Ovary (tissue), 10 donors: ENCODE measurements at regions of chr11 and their contacts with region 1.

Region 1: DNA sequence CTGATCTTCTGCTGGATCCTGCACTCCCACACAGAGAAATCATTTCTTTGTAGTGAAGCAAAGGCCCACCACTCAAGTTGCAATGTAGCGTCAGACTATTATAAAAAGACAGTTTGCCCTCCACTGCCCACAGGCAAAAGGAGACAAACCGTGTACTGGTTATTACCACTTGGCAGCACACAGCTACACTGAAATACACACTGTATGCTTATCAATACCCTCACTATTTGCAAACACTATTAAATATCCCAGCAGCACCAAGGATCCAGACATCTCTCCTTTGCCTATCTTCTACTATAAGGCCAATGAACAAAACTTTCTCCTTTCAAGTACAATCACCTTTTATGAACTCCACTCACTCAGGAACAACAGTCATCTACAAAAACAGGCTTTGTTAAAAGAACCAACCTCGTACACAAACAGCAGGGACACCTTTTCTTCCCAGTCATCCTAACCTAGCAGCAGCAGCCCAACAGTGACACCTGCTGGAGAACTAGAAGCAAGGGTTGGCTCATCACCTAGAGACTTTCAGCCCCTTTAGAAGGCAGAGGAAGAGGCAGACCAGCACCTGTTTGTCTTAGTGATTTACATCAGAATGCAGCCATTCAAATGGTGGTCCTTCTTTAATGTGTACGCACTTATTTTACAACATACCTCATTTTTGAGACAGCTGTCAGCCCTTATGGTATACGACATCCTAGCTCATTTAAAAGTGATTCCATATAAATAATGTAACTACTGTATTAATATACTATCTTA is 56.1 kb downstream of the AMBRA1 start:
- DNase-seq: peak; percentile 45 to 65 (median 62)
- H3K4me3 ChIP-seq: no peak overlapping the region
- H3K27ac ChIP-seq: no peak overlapping the region
- H3K4me1 ChIP-seq: no peaks in the 10 kb centered on the region
- H3K27me3 ChIP-seq: no peaks in the 10 kb centered on the region
- CTCF ChIP-seq: peak; percentile 54 to 79 (median 72)
- EP300 ChIP-seq: no peak
- POLR2A ChIP-seq: no peak

Region 2: GRCh38 chr11:46369458-46370152 is 168.1 kb before region 1 on chr11:
- intact Hi-C with region 1: loop called in 1 of 4 experiments (anchors 10 kb)
- DNase-seq: peak in 3 of 5 donors; percentile 56 to 69 (median 57)
- H3K4me3 ChIP-seq: no peak overlapping the region
- H3K27ac ChIP-seq: no peak overlapping the region
- H3K4me1 ChIP-seq: peaks cover 5% of the 10 kb centered on the region
- H3K27me3 ChIP-seq: no peaks in the 10 kb centered on the region
- CTCF ChIP-seq: peak; percentile 21 to 60 (median 44)
- EP300 ChIP-seq: no peak
- POLR2A ChIP-seq: no peak

Region 3: GRCh38 chr11:46392421-46393230 is 145.1 kb before region 1 on chr11:
- intact Hi-C with region 1: loop called in 3 of 4 experiments (anchors 2 to 5 kb)
- DNase-seq: peak; percentile 80 to 92 (median 87)
- H3K4me3 ChIP-seq: no peak overlapping the region
- H3K27ac ChIP-seq: no peak overlapping the region
- H3K4me1 ChIP-seq: peaks cover 19% of the 10 kb centered on the region
- H3K27me3 ChIP-seq: peaks cover 4% of the 10 kb centered on the region
- CTCF ChIP-seq: no peak
- EP300 ChIP-seq: no peak
- POLR2A ChIP-seq: no peak

Region 4: DNA sequence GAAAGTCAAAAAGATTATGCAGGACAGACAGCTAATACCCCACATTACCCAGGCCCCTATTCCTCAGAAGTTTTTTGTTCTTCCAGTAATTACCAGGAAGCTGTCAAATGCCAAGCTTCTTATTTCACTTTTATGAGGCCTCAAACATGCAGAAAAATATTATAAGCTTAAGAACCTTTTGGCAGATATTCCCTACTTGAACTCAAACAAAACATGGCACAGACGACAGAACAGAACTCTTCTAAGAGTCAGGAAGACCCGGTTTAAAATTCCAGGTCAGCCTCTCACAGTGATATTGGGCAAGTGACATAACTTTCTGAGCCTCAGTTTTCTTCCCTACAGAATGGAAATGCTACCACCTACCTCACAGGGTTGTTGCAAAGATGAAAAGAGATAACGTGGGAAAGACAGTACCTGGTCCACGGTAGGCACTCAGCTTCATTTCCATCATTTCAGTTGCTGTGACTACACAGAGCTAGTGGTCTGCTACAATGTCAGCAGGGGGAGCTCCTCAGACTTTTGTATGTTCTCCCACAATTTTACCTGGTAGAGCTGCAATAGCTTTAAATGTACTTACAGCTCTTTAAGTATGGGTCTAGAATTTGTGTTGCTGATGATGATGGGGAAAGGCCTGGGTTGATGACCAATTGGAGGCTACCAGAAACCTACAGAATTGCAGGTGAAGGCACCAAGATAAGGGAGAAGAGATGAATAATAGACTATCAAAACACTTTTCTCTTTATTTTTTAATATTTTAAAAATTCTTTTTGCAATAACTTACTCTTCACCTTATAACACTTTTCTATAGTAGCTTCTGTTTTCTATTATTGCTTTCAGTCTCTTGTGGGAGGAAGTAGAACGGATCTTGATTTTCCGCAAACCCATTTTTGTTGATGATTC is 47.8 kb before region 1 on chr11:
- intact Hi-C with region 1: loop called in 1 of 4 experiments (anchors 10 kb)
- DNase-seq: no peak
- H3K4me3 ChIP-seq: no peak overlapping the region
- H3K27ac ChIP-seq: no peak overlapping the region
- H3K4me1 ChIP-seq: peaks cover 2% of the 10 kb centered on the region
- H3K27me3 ChIP-seq: no peaks in the 10 kb centered on the region
- CTCF ChIP-seq: no peak
- EP300 ChIP-seq: no peak
- POLR2A ChIP-seq: no peak

Region 5: DNA sequence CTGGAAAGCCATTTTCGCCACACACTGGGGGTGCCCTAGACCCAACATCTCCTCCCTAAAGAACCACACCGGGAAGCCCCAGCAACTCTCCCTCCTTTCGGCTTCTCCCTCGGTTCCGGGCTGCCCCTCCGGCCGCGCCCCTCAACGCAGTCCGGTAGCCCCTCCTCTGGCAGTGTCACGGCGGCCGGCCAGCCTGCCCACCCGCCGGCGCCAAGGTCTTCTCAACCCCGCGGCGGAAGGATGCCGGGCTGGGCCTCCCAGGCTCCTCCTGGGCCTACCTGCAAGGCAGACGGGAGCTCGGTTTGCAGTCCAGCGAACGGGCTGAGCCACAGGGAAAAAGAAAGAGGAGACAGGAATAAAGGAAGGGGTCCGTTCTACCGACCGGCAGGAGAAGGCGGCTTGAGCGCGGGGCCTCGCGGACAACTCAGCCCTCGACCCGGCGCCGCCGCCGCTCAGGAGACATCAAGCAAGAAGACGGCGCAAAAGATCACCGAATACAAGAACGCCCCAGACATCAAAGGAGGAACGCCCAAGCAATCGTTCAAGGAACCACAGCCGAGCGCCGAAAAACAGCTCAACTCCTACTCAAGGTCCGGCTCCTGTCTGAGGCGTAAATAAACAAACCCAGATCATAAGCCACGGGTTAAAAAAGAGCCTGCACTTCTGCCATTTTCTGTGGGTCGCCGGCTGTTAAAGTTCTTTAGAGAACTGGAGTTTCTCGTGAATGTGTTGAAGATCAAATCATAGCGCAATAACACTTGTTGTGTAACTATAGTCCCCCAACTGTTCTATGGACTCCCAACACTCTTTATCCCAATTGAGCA is 56.0 kb after region 1 on chr11 and contains the start of gene AMBRA1:
- intact Hi-C with region 1: no loop called
- DNase-seq: peak; percentile 75 to 91 (median 84)
- H3K4me3 ChIP-seq: peak within 1 kb of the TSS; percentile 87
- H3K27ac ChIP-seq: peak within 1 kb of the TSS; percentile 60 to 63
- H3K4me1 ChIP-seq: peaks cover 8% of the 10 kb centered on the region
- H3K27me3 ChIP-seq: no peaks in the 10 kb centered on the region
- CTCF ChIP-seq: no peak
- EP300 ChIP-seq: no peak
- POLR2A ChIP-seq: peak; percentile 55
- total RNA-seq, gene AMBRA1: 22.3 to 38.1 (median 34.4) TPM